GM10248 (cell line): ENCODE measurements at regions of chr14 and their contacts with region 1.

Region 1: GRCh38 chr14:71138448-71139293 is 231.4 kb downstream of the PCNX1 start:
- DNase-seq: peak; percentile 78
- CTCF ChIP-seq: peak; percentile 91

Region 2: DNA sequence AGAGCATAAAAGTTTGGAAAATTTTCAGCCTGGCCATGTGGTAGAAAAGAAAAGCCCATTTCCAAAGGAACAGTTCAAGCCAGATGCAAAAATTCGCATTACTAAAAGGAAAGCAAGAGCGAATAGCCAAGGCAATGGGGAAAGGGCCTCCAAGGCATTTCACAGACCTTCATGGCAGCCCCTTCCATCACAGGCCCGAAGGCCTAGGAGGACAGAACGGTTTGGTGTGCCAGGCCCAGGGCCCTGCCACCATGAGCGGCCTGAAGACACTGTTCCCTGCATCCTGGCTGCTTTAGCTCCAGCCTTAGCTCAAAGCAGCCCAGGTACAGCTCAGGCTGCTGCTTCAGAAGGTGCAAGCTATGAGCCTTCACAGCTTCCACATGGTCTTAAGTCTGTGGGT is 12.1 kb after region 1 on chr14:
- CTCF ChIA-PET with region 1: interaction called, 26 read pairs
- POLR2A ChIA-PET with region 1: no interaction called
- DNase-seq: no peak
- CTCF ChIP-seq: no peak